SK-N-SH (cell line): ENCODE measurements at regions of chr10 and their contacts with region 1.

Region 1: GRCh38 chr10:102009801-102010425 is 46.1 kb downstream of the ARMH3 start:
- DNase-seq: peak; percentile 74
- H3K4me3 ChIP-seq: no peak overlapping the region
- H3K27ac ChIP-seq: peak overlapping the region in 1 of 2 experiments; percentile 47; a peak in 3 of 4 replicates
- H3K4me1 ChIP-seq: peaks cover 0 to 4% of the 10 kb centered on the region in 2 experiments; a peak in 1 of 4 replicates
- H3K27me3 ChIP-seq: no peaks in the 10 kb centered on the region
- CTCF ChIP-seq: peak; percentile 95
- EP300 ChIP-seq: no peak
- RAD21 ChIP-seq: peak; percentile 97

Region 2: GRCh38 chr10:101840741-101841453 is 169.0 kb before region 1 on chr10:
- CTCF ChIA-PET with region 1: interaction called, 301 read pairs
- POLR2A ChIA-PET with region 1: interaction called, 5 read pairs
- DNase-seq: peak; percentile 93
- H3K4me3 ChIP-seq: peak overlapping the region in 1 of 2 experiments; percentile 45; a peak in 1 of 4 replicates
- H3K27ac ChIP-seq: no peak overlapping the region
- H3K4me1 ChIP-seq: peaks cover 0 to 16% of the 10 kb centered on the region in 2 experiments; a peak in 1 of 4 replicates
- H3K27me3 ChIP-seq: no peaks in the 10 kb centered on the region
- CTCF ChIP-seq: peak; percentile 96
- EP300 ChIP-seq: no peak
- RAD21 ChIP-seq: peak; percentile 90

Region 3: GRCh38 chr10:101879456-101880231 is 130.3 kb before region 1 on chr10:
- CTCF ChIA-PET with region 1: interaction called, 40 read pairs
- POLR2A ChIA-PET with region 1: no interaction called
- DNase-seq: no peak
- H3K4me3 ChIP-seq: no peak overlapping the region
- H3K27ac ChIP-seq: peak overlapping the region in 1 of 2 experiments; percentile 47; a peak in 2 of 4 replicates
- H3K4me1 ChIP-seq: peaks cover 0 to 10% of the 10 kb centered on the region in 2 experiments; a peak in 1 of 4 replicates
- H3K27me3 ChIP-seq: no peaks in the 10 kb centered on the region
- CTCF ChIP-seq: no peak
- EP300 ChIP-seq: no peak
- RAD21 ChIP-seq: no peak

Region 4: GRCh38 chr10:101897633-101898032 is 112.3 kb before region 1 on chr10:
- CTCF ChIA-PET with region 1: interaction called, 25 read pairs
- POLR2A ChIA-PET with region 1: no interaction called
- DNase-seq: peak; percentile 8
- H3K4me3 ChIP-seq: no peak overlapping the region
- H3K27ac ChIP-seq: no peak overlapping the region
- H3K4me1 ChIP-seq: peaks cover 5 to 8% of the 10 kb centered on the region in 2 experiments; a peak in 1 of 4 replicates
- H3K27me3 ChIP-seq: no peaks in the 10 kb centered on the region
- CTCF ChIP-seq: no peak
- EP300 ChIP-seq: no peak
- RAD21 ChIP-seq: no peak

Region 5: DNA sequence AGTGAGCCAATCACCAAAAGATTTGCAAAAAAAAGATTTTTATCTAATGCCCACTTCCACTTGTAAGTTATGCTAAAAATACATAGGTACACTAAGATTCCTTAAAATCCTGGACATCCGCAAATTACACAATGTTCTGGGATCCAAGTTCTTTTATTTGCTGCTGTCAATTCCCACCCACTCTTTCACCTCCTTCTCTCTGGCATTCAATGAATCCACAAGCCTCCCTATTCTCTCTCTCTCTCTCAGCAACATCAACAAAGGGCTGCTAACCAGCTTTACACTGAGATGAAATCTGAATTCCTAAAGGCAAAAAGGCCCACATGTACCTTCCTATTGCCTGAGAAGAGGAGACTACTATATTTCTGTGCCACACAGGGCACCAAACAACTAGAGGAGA is 53.8 kb before region 1 on chr10:
- CTCF ChIA-PET with region 1: interaction called, 11 read pairs
- POLR2A ChIA-PET with region 1: no interaction called
- DNase-seq: no peak
- H3K4me3 ChIP-seq: no peak overlapping the region
- H3K27ac ChIP-seq: no peak overlapping the region
- H3K4me1 ChIP-seq: peaks cover 0 to 5% of the 10 kb centered on the region in 2 experiments; a peak in 1 of 4 replicates
- H3K27me3 ChIP-seq: no peaks in the 10 kb centered on the region
- CTCF ChIP-seq: no peak
- EP300 ChIP-seq: no peak
- RAD21 ChIP-seq: no peak

Region 6: DNA sequence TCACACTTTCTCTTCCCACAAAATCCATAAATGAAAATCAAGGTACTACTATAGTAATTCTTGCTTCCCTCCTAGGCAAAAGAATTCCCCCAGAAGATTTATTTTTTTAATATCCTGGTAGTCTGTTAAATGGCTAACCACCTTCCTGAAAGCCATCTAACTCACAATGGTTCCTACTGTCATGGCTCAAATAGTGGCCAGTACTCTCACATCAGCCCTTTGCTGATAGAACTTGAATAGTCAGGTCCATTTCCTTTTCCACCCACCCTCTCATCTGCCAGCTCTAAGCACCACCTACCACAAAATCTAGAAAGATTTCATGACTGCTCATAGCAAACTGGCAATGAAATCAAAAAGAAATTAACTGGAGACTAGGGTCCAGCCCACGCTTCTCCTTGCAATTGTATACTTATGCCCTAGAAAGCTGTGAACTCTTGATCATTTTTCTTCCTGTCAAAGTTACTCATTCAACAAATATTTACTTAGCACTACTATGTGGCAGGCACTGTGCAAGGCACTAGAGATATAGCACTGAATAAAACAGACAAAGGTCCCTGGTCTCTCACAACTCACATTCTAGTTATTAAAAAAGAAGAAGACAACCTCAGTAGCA is 14.4 kb before region 1 on chr10:
- CTCF ChIA-PET with region 1: interaction called, 16 read pairs
- POLR2A ChIA-PET with region 1: no interaction called
- DNase-seq: no peak
- H3K4me3 ChIP-seq: no peak overlapping the region
- H3K27ac ChIP-seq: no peak overlapping the region
- H3K4me1 ChIP-seq: peaks cover 0 to 3% of the 10 kb centered on the region in 2 experiments; a peak in 1 of 4 replicates
- H3K27me3 ChIP-seq: no peaks in the 10 kb centered on the region
- CTCF ChIP-seq: no peak
- EP300 ChIP-seq: no peak
- RAD21 ChIP-seq: no peak

Region 7: DNA sequence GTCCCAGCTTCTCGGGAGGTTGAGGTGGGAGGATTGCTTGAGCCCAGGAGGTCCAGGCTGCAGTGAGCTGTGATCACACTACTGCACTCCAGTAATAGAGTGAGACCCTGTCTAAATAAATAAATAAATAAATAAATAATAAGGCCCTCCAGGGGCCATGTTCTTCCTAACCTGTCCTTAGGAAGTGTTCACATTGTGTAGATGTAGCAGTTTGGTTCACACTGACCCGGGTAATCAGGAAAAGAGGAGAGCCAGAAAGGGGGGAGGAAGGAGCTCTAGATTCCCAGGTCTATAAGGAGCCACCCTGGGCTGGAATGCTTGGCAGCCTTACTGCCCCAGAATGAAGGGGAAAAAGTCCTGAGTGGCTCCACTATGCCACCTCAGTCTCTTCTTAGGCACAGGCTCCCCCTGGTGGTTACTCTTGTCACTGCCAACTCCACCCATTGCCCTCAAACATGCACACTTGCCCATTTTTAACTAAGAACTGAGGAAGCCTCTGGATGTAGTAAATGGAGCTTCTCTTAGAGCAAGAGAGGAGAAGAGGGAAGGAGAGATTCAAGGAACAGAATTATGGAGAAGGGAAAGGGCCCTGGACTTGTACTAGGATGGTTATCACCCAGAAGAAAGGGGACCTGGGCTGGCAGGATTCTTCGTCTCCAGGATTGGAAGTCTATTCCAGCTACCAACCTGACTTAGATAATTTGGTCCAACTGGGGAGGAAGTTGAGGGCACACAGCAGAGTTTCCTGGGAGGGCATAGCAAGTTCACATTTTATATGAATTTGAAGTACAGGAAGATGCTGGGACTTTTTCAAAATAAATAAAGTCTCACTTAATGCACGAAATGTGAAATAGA is 63.0 kb after region 1 on chr10:
- CTCF ChIA-PET with region 1: interaction called, 22 read pairs
- POLR2A ChIA-PET with region 1: no interaction called
- DNase-seq: peak; percentile 78
- H3K4me3 ChIP-seq: no peak overlapping the region
- H3K27ac ChIP-seq: no peak overlapping the region
- H3K4me1 ChIP-seq: peaks cover 0 to 4% of the 10 kb centered on the region in 2 experiments; a peak in 2 of 4 replicates
- H3K27me3 ChIP-seq: no peaks in the 10 kb centered on the region
- CTCF ChIP-seq: peak; percentile 92
- EP300 ChIP-seq: no peak
- RAD21 ChIP-seq: peak; percentile 84